ENCODE measurements at regions of chr9 and their contacts with region 1.

Region 1: GRCh38 chr9:16726718-16727451 is 143.6 kb downstream of the BNC2 start:
- DNase-seq: peak; percentile 96
- H3K4me3 ChIP-seq: peak overlapping the region; percentile 58 to 71 (median 66)
- H3K27ac ChIP-seq: peak overlapping the region; percentile 87 to 96 (median 93)
- H3K4me1 ChIP-seq: peaks cover 3 to 77% (median 61%) of the 10 kb centered on the region in 4 donors
- H3K27me3 ChIP-seq: no peaks in the 10 kb centered on the region
- CTCF ChIP-seq: no peak
- EP300 ChIP-seq: no peak
- POLR2A ChIP-seq: peak; percentile 46

Region 2: GRCh38 chr9:16191691-16192402 is 535.0 kb before region 1 on chr9:
- intact Hi-C with region 1: loop called (anchors 10 kb)
- DNase-seq: peak; percentile 93
- H3K4me3 ChIP-seq: peak overlapping the region in 1 of 4 donors; percentile 30
- H3K27ac ChIP-seq: no peak overlapping the region
- H3K4me1 ChIP-seq: peaks cover 4 to 15% (median 11%) of the 10 kb centered on the region in 4 donors
- H3K27me3 ChIP-seq: no peaks in the 10 kb centered on the region
- CTCF ChIP-seq: peak; percentile 70 to 85 (median 71)
- EP300 ChIP-seq: no peak
- POLR2A ChIP-seq: no peak

Region 3: GRCh38 chr9:16417161-16417560 is 309.7 kb before region 1 on chr9:
- intact Hi-C with region 1: no loop called
- DNase-seq: peak; percentile 21
- H3K4me3 ChIP-seq: no peak overlapping the region
- H3K27ac ChIP-seq: peak overlapping the region in 1 of 4 donors; percentile 21
- H3K4me1 ChIP-seq: peaks cover 0 to 9% (median 0%) of the 10 kb centered on the region in 4 donors
- H3K27me3 ChIP-seq: no peaks in the 10 kb centered on the region
- CTCF ChIP-seq: no peak
- EP300 ChIP-seq: no peak
- POLR2A ChIP-seq: no peak

Region 4: GRCh38 chr9:16787724-16788123 is 60.8 kb after region 1 on chr9:
- intact Hi-C with region 1: no loop called
- DNase-seq: no peak
- H3K4me3 ChIP-seq: no peak overlapping the region
- H3K27ac ChIP-seq: peak overlapping the region in 1 of 4 donors; percentile 31
- H3K4me1 ChIP-seq: peaks cover 0 to 38% (median 34%) of the 10 kb centered on the region in 4 donors
- H3K27me3 ChIP-seq: no peaks in the 10 kb centered on the region
- CTCF ChIP-seq: no peak
- EP300 ChIP-seq: no peak
- POLR2A ChIP-seq: no peak

Measured in esophagus muscularis mucosa (tissue), 4 donors.